CD4-positive, alpha-beta memory T cell (primary cell): ENCODE measurements at regions of chr3 and their contacts with region 1.

Region 1: GRCh38 chr3:33277193-33277882 is at the start of gene FBXL2:
- DNase-seq: peak in 1 of 5 donors; percentile 0
- H3K4me3 ChIP-seq: no peak within 1 kb of the TSS
- H3K4me3 Mint-ChIP-seq: peak within 1 kb of the TSS; percentile 52 to 78 (median 66)
- H3K27ac ChIP-seq: no peak within 1 kb of the TSS
- H3K27ac Mint-ChIP-seq: no peak within 1 kb of the TSS
- H3K4me1 ChIP-seq: no peaks in the 10 kb centered on the region
- H3K4me1 Mint-ChIP-seq: peaks cover 0 to 3% (median 2%) of the 10 kb centered on the region in 4 donors
- H3K27me3 ChIP-seq: no peaks in the 10 kb centered on the region
- H3K27me3 Mint-ChIP-seq: peaks cover 24 to 29% of the 10 kb centered on the region in 2 donors
- total RNA-seq, gene FBXL2: not detected

Region 2: DNA sequence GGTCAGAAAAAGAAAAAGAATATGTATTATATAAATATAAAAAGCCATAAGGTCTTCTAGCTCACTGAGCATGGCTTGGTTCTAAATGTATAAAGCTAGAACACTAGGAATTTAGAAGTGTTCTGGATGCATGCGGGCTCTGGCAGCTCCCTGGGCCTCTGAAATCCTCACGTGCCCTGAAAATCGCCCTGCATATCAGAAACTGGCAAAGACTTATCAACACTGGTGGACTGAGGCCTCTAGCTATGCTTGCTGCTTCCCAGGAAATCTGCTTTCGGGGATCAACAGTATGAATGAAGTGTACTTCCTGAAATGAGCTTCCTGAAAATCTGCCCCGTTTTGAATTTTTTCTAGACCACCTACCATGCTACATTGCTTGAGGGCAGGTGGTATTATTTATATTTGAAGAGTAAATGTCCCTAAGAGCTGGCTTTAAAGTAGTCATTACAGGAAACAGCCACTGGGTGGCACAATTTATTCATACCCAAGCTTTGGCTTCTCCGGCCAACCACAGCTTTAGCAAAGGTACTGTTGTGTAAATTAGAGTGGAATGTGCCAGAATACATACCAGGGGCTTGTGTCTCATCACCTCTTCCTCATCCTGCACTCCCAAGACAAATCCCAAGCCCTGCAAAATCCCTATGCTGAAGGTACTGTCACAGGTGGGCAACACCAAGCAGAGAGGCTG is 145.9 kb before region 1 on chr3:
- CTCF ChIA-PET with region 1: no interaction called
- POLR2A ChIA-PET with region 1: no interaction called
- intact Hi-C with region 1: no loop called
- DNase-seq: peak in 4 of 5 donors; percentile 31 to 40 (median 35)
- H3K4me3 ChIP-seq: no peak overlapping the region
- H3K4me3 Mint-ChIP-seq: no peak overlapping the region
- H3K27ac ChIP-seq: no peak overlapping the region
- H3K27ac Mint-ChIP-seq: no peak overlapping the region
- H3K4me1 ChIP-seq: no peaks in the 10 kb centered on the region
- H3K4me1 Mint-ChIP-seq: peaks cover 0 to 8% (median 5%) of the 10 kb centered on the region in 4 donors
- H3K27me3 ChIP-seq: no peaks in the 10 kb centered on the region
- H3K27me3 Mint-ChIP-seq: no peaks in the 10 kb centered on the region

Region 3: GRCh38 chr3:33313331-33313730 is 36.0 kb after region 1 on chr3:
- CTCF ChIA-PET with region 1: no interaction called
- POLR2A ChIA-PET with region 1: no interaction called
- intact Hi-C with region 1: loop called (anchors 1 kb)
- DNase-seq: no peak
- H3K4me3 ChIP-seq: no peak overlapping the region
- H3K4me3 Mint-ChIP-seq: no peak overlapping the region
- H3K27ac ChIP-seq: no peak overlapping the region
- H3K27ac Mint-ChIP-seq: no peak overlapping the region
- H3K4me1 ChIP-seq: no peaks in the 10 kb centered on the region
- H3K4me1 Mint-ChIP-seq: peaks cover 0 to 4% (median 3%) of the 10 kb centered on the region in 4 donors
- H3K27me3 ChIP-seq: no peaks in the 10 kb centered on the region
- H3K27me3 Mint-ChIP-seq: peaks cover 10 to 17% of the 10 kb centered on the region in 2 donors